ENCODE measurements at regions of chr1 and their contacts with region 1.

Region 1: DNA sequence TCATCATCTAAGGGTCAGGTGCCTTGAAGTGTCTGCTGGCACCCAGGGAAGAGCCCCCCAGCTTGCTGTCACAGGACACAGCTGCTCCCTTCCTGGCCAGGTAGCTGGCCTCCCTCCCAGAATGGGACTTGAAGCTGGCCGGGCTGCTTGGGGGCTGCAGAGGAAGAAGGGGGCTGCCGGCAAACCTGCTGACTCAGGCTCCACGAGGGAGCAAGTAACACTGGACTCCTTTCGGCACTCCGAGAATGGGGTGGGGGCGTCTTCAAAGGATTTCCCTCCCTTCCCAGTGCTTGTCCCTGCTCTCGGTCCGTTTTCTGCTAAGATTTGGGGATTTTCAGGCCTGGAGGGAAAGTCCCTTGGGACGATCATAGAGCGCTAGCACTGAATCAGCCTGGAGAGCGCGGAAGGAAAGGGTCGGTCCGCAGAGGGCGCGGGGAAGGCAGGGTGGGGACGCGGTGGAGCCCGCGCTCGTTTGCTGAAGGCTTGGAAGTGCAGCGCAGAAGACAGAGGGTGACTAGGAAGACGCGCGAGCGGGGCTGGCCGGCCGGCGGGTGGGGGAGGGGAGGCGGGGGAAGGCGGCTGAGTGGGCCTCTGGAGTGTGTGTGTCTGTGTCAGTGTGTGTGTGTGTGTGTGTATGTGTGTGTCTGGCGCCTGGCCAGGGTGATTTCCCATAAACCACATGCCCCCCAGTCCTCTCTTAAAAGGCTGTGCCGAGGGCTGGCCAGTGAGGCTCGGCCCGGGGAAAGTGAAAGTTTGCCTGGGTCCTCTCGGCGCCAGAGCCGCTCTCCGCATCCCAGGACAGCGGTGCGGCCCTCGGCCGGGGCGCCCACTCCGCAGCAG is at the start of gene CSF1:
- DNase-seq: peak; percentile 60
- H3K4me3 Mint-ChIP-seq: peak within 1 kb of the TSS; percentile 97
- H3K27ac Mint-ChIP-seq: peak within 1 kb of the TSS; percentile 95
- H3K4me1 Mint-ChIP-seq: peaks cover 84% of the 10 kb centered on the region
- H3K27me3 Mint-ChIP-seq: no peaks in the 10 kb centered on the region
- total RNA-seq, gene CSF1: 269 and 275 TPM in 2 replicates

Region 2: DNA sequence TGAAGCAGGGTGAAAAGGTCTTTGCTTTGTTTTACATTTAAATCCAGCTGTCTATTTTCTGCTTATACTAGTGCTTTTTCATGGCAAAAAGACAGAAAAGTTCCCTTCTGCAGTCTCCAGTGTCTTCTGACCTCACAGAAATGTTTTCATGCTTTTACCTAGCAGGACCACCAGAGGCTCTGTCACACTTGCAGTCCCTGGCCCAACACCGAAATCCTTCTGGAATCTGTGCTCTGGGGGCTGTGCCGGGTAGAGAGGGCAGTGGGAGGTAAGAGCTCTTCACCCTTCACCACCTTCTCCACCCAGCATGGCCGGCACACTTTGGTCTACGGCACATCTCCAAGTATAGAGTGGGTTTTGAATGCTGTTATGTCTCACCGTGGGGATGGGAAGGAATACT is 311.7 kb before region 1 on chr1:
- intact Hi-C with region 1: no loop called
- DNase-seq: no peak
- H3K4me3 Mint-ChIP-seq: no peak overlapping the region
- H3K27ac Mint-ChIP-seq: no peak overlapping the region
- H3K4me1 Mint-ChIP-seq: no peaks in the 10 kb centered on the region
- H3K27me3 Mint-ChIP-seq: no peaks in the 10 kb centered on the region

Region 3: DNA sequence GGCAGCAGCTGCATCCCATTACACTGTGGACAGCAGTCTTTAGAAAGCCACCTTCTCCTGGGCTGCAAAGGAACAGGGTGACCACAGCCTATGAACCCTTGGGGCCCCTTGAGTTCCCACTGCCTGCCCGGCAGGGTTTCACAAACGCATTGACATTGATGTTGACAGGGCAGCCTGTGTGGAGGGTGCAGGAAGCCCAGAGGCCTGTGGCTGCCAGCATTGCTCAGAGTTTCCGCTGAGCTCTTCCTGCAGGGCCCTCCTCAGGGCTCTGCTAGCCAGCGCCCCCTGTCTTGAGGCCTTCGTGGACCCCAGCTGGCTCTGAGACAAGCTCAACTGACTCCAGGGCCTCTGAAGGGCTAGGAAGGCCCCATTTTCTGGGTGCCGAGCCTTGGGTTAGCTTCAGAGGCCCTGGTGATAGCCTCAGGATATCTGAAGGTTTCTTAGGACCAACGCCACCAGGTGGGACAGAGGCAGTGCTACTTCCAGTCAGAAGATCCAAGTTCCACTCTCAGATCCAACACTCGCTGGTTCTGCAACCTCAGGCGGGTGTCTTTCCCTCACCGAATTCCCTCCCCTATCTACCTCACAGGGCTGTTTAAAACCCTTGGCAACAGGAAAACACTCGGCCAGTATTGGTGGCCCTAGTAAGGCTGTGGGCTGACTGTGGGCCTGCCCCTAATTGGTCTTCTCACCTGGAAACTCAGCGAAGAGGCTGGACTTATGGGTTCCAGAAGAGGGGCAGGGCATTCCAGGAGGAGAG is 119.4 kb before region 1 on chr1:
- intact Hi-C with region 1: loop called (anchors 1 kb)
- DNase-seq: peak; percentile 73
- H3K4me3 Mint-ChIP-seq: peak overlapping the region; percentile 61
- H3K27ac Mint-ChIP-seq: peak overlapping the region; percentile 77
- H3K4me1 Mint-ChIP-seq: peaks cover 68% of the 10 kb centered on the region
- H3K27me3 Mint-ChIP-seq: no peaks in the 10 kb centered on the region

Region 4: DNA sequence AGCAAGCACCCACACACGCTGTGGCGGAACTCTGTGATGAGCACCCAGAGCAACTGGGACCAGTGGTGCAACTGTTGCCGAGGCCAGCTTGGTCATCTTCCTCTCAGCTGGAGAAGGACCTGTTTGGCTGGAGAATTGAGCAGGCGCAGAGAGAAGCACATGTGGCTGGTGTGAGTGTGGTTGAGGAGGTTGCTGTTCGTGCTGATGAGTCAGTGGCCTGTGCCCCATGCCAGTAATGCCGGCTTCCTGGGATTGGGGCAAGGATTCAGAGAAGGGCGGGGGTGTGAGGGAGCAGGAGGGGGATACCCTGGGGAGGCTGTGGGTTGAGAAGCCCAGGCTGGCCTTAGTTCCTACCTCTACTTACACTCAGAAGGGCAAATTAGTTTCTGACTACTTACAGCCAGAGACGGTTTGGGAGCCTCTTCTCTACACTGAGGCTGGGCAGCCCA is 89.1 kb before region 1 on chr1:
- intact Hi-C with region 1: loop called (anchors 2 kb)
- DNase-seq: no peak
- H3K4me3 Mint-ChIP-seq: no peak overlapping the region
- H3K27ac Mint-ChIP-seq: peak overlapping the region; percentile 73
- H3K4me1 Mint-ChIP-seq: peaks cover 60% of the 10 kb centered on the region
- H3K27me3 Mint-ChIP-seq: no peaks in the 10 kb centered on the region

Region 5: GRCh38 chr1:109877320-109877771 is 33.0 kb before region 1 on chr1:
- intact Hi-C with region 1: no loop called
- DNase-seq: no peak
- H3K4me3 Mint-ChIP-seq: no peak overlapping the region
- H3K27ac Mint-ChIP-seq: no peak overlapping the region
- H3K4me1 Mint-ChIP-seq: peaks cover 12% of the 10 kb centered on the region
- H3K27me3 Mint-ChIP-seq: peaks cover 10% of the 10 kb centered on the region

Region 6: DNA sequence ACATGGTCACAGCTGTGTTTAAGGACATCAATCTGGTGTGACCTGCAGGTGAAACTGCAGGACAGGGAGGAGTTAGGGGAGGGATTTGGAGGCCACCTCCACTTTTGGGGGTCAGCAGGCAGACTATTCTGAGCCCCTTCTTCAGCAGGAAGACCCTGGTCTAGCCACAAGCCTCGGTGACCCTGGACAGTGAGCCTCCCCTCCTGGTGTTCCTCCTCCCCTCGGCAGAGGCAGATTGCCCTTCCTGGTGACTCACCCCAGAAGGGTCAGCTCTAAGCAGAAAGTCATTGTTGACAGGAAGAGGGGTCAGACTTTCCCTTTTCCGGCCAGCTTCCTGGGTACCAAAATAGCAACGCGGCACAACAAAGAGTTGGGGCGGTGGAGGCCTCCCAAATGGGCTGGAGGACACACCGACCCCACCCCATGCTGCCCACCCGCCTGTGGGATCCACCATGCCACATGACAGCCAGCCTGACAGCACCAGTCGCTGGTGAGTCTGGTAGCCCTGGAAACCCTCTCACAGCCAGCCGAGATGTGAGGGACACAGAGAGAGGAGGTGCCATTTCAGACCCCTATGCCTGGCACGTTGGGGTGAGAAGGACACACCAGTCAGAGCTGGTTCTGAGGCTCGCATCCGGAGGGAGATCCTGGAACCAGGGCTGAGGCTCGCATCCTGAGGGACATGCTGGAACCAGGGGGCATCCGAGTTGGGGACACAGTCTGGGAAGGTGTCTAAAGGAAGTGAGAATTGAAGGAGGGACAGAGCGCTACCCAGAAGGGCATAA is 14.4 kb before region 1 on chr1:
- intact Hi-C with region 1: loop called (anchors 1 kb)
- DNase-seq: peak; percentile 30
- H3K4me3 Mint-ChIP-seq: no peak overlapping the region
- H3K27ac Mint-ChIP-seq: no peak overlapping the region
- H3K4me1 Mint-ChIP-seq: peaks cover 5% of the 10 kb centered on the region
- H3K27me3 Mint-ChIP-seq: no peaks in the 10 kb centered on the region

Measured in activated T-helper 1 cell treated with anti-CD3 and anti-CD28 coated beads, Interleukin-12 subunit alpha, Interleukin-12 subunit beta, Interleukin-2, Interleukin-4 antibody, amounts not matched to agents 30 ng/mL and 10 ng/mL and 1 ng/mL, durations not matched to agents 14 hours and 24 hours and 36 hours (primary cell).